Activated naive CD4-positive, alpha-beta T cell treated with anti-CD3 and anti-CD28 coated beads, Interleukin-2, amount 10 ng/mL, durations not matched to agents 7 days and 5 days (primary cell): ENCODE measurements at regions of chr17 and their contacts with region 1.

Region 1: DNA sequence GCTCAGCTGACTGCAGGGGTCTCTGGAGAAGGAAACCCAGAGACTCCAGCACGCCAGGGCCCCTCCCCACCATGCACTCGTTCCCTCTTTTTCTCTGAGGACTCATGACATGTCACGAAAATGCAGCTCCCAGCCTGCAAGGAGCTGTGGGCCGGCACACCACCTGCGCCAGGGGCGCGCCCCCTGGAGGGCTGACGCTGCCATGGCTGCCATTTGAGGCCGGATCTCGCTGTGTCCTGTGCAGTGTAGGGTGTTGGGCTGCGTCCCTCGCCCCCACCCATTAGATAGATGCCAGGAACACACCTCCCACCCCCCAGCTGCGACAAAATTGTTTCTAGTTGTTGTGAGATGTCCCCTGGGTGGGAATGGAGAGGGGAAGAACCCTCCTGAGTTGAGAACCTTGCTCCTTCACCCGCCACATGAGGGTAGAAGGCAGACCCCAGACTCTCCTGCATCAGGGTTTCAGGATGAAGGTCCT is 8.2 kb downstream of the SYNGR2 start:
- DNase-seq: peak; percentile 83
- H3K4me3 Mint-ChIP-seq: no peak overlapping the region
- H3K27ac Mint-ChIP-seq: peak overlapping the region; percentile 19
- H3K4me1 Mint-ChIP-seq: peaks cover 72% of the 10 kb centered on the region
- H3K27me3 Mint-ChIP-seq: no peaks in the 10 kb centered on the region

Region 2: DNA sequence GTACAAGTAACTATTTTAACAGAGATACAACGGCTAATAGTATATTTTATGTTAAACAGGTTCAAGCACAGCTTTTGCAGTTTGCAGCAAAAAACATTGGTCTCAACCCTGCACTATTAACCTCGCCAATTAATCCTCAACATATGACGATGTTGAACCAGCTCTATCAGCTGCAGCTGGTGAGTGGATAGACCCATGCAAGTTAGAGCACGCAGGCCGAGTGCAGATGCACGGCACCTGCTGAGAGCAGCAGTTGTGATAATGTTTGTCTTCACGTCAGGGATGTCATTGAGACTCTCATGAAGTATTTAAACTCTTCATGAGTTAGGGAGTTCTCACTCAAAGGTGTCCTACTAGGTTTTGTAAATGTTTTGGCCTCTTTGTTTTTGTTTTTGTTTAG is 93.6 kb before region 1 on chr17:
- CTCF ChIA-PET with region 1: interaction called, 28 read pairs
- DNase-seq: no peak
- H3K4me3 Mint-ChIP-seq: no peak overlapping the region
- H3K27ac Mint-ChIP-seq: no peak overlapping the region
- H3K4me1 Mint-ChIP-seq: peaks cover 16% of the 10 kb centered on the region
- H3K27me3 Mint-ChIP-seq: no peaks in the 10 kb centered on the region

Region 3: GRCh38 chr17:78112518-78113226 is 63.9 kb before region 1 on chr17:
- CTCF ChIA-PET with region 1: interaction called, 10 read pairs
- DNase-seq: peak; percentile 83
- H3K4me3 Mint-ChIP-seq: no peak overlapping the region
- H3K27ac Mint-ChIP-seq: peak overlapping the region; percentile 76
- H3K4me1 Mint-ChIP-seq: peaks cover 41% of the 10 kb centered on the region
- H3K27me3 Mint-ChIP-seq: no peaks in the 10 kb centered on the region

Region 4: DNA sequence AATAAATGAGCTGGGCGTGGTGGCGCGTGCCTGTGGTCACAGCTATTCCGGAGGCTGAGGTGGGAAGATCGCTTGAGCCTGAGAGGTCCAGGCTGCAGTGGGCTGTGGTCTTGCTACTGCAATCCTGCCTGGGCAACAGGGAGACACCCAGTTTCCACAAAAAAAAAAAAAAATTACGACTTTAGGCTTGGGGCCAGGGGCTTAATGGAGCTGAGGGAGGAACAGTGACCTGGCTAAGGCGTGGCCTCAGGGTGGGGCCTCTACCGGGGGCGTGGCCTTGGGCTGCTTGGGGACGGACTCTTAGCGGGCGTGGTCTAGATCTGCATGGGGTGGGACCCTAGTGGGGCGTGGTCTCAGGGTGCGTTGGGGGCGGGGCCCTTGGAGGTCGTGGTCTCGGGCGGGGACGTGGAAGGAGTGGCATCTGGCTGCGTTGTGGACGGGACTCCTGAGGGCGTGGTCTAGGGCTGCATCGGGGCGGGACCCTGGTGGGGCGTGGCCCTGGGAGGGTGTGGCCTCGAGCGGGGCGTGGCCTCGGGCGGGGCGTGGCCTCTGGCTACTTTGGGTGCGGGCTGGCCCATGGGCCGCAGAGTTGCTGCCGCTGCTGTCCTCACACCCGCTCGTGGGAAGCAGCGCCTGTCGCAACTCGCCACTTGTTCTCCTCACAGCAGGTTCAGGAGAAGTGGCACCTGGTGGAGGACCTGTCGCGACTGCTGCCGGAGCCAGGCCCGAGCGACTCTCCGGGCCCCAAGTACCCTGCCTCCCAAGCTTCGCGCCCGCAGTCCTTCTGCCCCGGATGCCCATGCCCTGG is 36.2 kb before region 1 on chr17:
- CTCF ChIA-PET with region 1: interaction called, 11 read pairs
- DNase-seq: peak; percentile 98
- H3K4me3 Mint-ChIP-seq: no peak overlapping the region
- H3K27ac Mint-ChIP-seq: peak overlapping the region; percentile 88
- H3K4me1 Mint-ChIP-seq: peaks cover 72% of the 10 kb centered on the region
- H3K27me3 Mint-ChIP-seq: no peaks in the 10 kb centered on the region

Region 5: GRCh38 chr17:78154903-78155811 is 21.4 kb before region 1 on chr17:
- CTCF ChIA-PET with region 1: no interaction called
- DNase-seq: no peak
- H3K4me3 Mint-ChIP-seq: no peak overlapping the region
- H3K27ac Mint-ChIP-seq: no peak overlapping the region
- H3K4me1 Mint-ChIP-seq: no peaks in the 10 kb centered on the region
- H3K27me3 Mint-ChIP-seq: peaks cover 15% of the 10 kb centered on the region